ENCODE measurements at regions of chr3 and their contacts with region 1.

Region 1: DNA sequence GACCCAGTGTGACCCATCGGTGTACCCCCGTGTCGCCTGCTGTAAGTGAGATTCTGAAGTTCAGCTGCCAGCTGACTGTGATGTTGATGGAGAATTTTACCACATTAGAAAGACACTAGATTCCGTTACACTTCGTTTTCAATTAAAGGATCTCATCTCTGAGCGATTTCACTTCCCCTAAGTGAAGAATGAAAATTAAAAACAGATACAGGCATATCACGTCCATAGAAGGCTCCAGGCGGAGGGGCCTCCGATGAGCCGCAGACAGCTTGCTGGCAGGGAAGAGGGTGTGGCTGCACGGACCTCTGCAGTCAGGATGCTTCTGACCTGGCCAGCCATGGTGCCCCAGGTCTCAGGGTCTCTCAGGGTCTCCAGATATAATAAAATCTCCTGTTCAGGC is 6.6 kb upstream of the CPN2 start:
- DNase-seq: no peak
- H3K4me3 Mint-ChIP-seq: no peak overlapping the region
- H3K27ac Mint-ChIP-seq: no peak overlapping the region
- H3K4me1 Mint-ChIP-seq: no peaks in the 10 kb centered on the region
- H3K27me3 Mint-ChIP-seq: peaks cover 3% of the 10 kb centered on the region

Region 2: GRCh38 chr3:194344012-194344411 is 13.7 kb before region 1 on chr3:
- CTCF ChIA-PET with region 1: interaction called, 12 read pairs
- POLR2A ChIA-PET with region 1: no interaction called
- DNase-seq: peak; percentile 72
- H3K4me3 Mint-ChIP-seq: no peak overlapping the region
- H3K27ac Mint-ChIP-seq: no peak overlapping the region
- H3K4me1 Mint-ChIP-seq: no peaks in the 10 kb centered on the region
- H3K27me3 Mint-ChIP-seq: peaks cover 12% of the 10 kb centered on the region

Measured in activated CD4-positive, alpha-beta T cell treated with anti-CD3 and anti-CD28 coated beads, Interleukin-2, amount 10 ng/mL, durations not matched to agents 7 days and 5 days (primary cell).